ENCODE measurements at regions of chr17 and their contacts with region 1.

Region 1: GRCh38 chr17:45197555-45198334 is 23.9 kb upstream of the FMNL1 start:
- DNase-seq: peak; percentile 80 to 95
- ATAC-seq: peak; percentile 96 to 98
- H3K4me3 ChIP-seq: no peak overlapping the region
- H3K27ac ChIP-seq: peak overlapping the region; percentile 93 to 94
- H3K4me1 ChIP-seq: peaks cover 51% of the 10 kb centered on the region
- CTCF ChIP-seq: peak; percentile 100
- EP300 ChIP-seq: no peak
- POLR2A ChIP-seq: no peak
- RAD21 ChIP-seq: peak; percentile 100

Region 2: GRCh38 chr17:44919885-44920564 is 277.7 kb before region 1 on chr17:
- CTCF ChIA-PET with region 1: interaction called, 12 read pairs
- POLR2A ChIA-PET with region 1: no interaction called
- DNase-seq: peak; percentile 89 to 97
- ATAC-seq: peak; percentile 85 to 90
- H3K4me3 ChIP-seq: no peak overlapping the region
- H3K27ac ChIP-seq: peak overlapping the region; percentile 14 to 80; a peak in 4 of 6 replicates
- H3K4me1 ChIP-seq: peaks cover 23% of the 10 kb centered on the region
- CTCF ChIP-seq: peak; percentile 98
- EP300 ChIP-seq: no peak
- POLR2A ChIP-seq: no peak
- RAD21 ChIP-seq: peak; percentile 99

Region 3: GRCh38 chr17:45110668-45111611 is 86.8 kb before region 1 on chr17:
- CTCF ChIA-PET with region 1: interaction called, 20 read pairs
- POLR2A ChIA-PET with region 1: no interaction called
- DNase-seq: no peak
- ATAC-seq: peak in 1 of 2 experiments; percentile 22; a peak in 3 of 6 replicates
- H3K4me3 ChIP-seq: no peak overlapping the region
- H3K27ac ChIP-seq: peak overlapping the region in 1 of 2 experiments; percentile 48; a peak in 3 of 6 replicates
- H3K4me1 ChIP-seq: no peaks in the 10 kb centered on the region
- CTCF ChIP-seq: no peak
- EP300 ChIP-seq: no peak
- POLR2A ChIP-seq: no peak
- RAD21 ChIP-seq: no peak

Region 4: GRCh38 chr17:45155029-45155428 is 42.7 kb before region 1 on chr17:
- CTCF ChIA-PET with region 1: interaction called, 2,147 read pairs
- POLR2A ChIA-PET with region 1: interaction called, 352 read pairs
- DNase-seq: no peak
- ATAC-seq: no peak
- H3K4me3 ChIP-seq: no peak overlapping the region
- H3K27ac ChIP-seq: peak overlapping the region; percentile 21 to 68; a peak in 4 of 6 replicates
- H3K4me1 ChIP-seq: peaks cover 47% of the 10 kb centered on the region
- CTCF ChIP-seq: no peak
- EP300 ChIP-seq: no peak
- POLR2A ChIP-seq: no peak
- RAD21 ChIP-seq: no peak

Region 5: GRCh38 chr17:45184144-45184543 is 13.6 kb before region 1 on chr17:
- CTCF ChIA-PET with region 1: interaction called, 2,147 read pairs
- POLR2A ChIA-PET with region 1: no interaction called
- DNase-seq: no peak
- ATAC-seq: no peak
- H3K4me3 ChIP-seq: no peak overlapping the region
- H3K27ac ChIP-seq: peak overlapping the region; percentile 60 to 79
- H3K4me1 ChIP-seq: peaks cover 23% of the 10 kb centered on the region
- CTCF ChIP-seq: no peak
- EP300 ChIP-seq: no peak
- POLR2A ChIP-seq: no peak
- RAD21 ChIP-seq: no peak

Region 6: GRCh38 chr17:45235416-45236281 is 37.9 kb after region 1 on chr17:
- CTCF ChIA-PET with region 1: interaction called, 49 read pairs
- POLR2A ChIA-PET with region 1: no interaction called
- DNase-seq: peak; percentile 87 to 93
- ATAC-seq: peak; percentile 60 to 75
- H3K4me3 ChIP-seq: no peak overlapping the region
- H3K27ac ChIP-seq: peak overlapping the region; percentile 35 to 66; a peak in 5 of 6 replicates
- H3K4me1 ChIP-seq: peaks cover 33% of the 10 kb centered on the region
- CTCF ChIP-seq: peak; percentile 95
- EP300 ChIP-seq: no peak
- POLR2A ChIP-seq: no peak
- RAD21 ChIP-seq: peak; percentile 79 to 82

Measured in A549 (cell line).